GM10248 (cell line): ENCODE measurements at regions of chr14 and their contacts with region 1.

Region 1: DNA sequence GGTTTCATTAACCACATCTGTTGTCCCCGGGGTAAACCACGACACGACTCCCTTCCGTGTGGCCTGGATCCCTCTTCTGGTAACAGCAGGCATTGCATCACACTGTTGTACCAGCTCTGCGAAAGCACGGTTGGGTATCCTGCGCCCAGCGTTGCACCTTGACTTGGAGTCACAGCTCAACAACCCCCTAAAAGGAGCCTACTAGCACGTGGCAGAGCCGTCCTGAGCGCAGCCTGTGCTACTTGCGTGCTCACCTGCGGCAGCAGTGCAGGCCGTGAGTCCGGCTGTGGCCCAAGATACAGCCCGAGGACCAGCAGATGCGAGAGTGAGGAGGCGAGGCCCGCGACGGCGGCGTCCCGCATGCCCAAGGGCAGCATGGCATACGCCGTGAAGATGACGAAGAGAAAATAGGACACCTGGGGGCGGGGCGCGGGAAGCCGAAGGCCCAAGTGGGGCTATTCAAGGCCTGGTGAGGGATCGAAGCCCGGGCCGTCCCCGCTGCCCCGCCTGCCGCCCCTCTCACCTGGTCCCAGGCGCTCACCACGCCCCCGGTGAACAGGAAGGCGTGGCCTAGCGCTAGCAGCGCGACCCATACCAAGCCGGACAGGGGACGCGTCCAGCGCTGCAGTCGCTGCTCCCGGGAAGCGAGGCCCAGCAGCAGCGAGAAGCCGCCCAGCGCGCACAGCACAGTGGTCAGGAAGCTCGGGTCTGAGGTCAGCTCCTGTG is 2.4 kb downstream of the ADCY4 start:
- DNase-seq: peak; percentile 91
- CTCF ChIP-seq: peak; percentile 73

Region 2: GRCh38 chr14:23953464-23954278 is 378.8 kb before region 1 on chr14 and contains the start of gene DHRS4:
- CTCF ChIA-PET with region 1: no interaction called
- POLR2A ChIA-PET with region 1: no interaction called
- DNase-seq: peak; percentile 86
- CTCF ChIP-seq: peak; percentile 91

Region 3: GRCh38 chr14:24241829-24242443 is 90.5 kb before region 1 on chr14:
- CTCF ChIA-PET with region 1: interaction called, 17 read pairs
- POLR2A ChIA-PET with region 1: no interaction called
- DNase-seq: peak; percentile 97
- CTCF ChIP-seq: peak; percentile 11

Region 4: GRCh38 chr14:24315807-24316603 is 16.4 kb before region 1 on chr14:
- CTCF ChIA-PET with region 1: interaction called, 72 read pairs
- POLR2A ChIA-PET with region 1: no interaction called
- DNase-seq: no peak
- CTCF ChIP-seq: no peak

Region 5: GRCh38 chr14:24366721-24367513 is 34.5 kb after region 1 on chr14:
- CTCF ChIA-PET with region 1: interaction called, 20 read pairs
- POLR2A ChIA-PET with region 1: no interaction called
- DNase-seq: peak; percentile 91
- CTCF ChIP-seq: no peak

Region 6: DNA sequence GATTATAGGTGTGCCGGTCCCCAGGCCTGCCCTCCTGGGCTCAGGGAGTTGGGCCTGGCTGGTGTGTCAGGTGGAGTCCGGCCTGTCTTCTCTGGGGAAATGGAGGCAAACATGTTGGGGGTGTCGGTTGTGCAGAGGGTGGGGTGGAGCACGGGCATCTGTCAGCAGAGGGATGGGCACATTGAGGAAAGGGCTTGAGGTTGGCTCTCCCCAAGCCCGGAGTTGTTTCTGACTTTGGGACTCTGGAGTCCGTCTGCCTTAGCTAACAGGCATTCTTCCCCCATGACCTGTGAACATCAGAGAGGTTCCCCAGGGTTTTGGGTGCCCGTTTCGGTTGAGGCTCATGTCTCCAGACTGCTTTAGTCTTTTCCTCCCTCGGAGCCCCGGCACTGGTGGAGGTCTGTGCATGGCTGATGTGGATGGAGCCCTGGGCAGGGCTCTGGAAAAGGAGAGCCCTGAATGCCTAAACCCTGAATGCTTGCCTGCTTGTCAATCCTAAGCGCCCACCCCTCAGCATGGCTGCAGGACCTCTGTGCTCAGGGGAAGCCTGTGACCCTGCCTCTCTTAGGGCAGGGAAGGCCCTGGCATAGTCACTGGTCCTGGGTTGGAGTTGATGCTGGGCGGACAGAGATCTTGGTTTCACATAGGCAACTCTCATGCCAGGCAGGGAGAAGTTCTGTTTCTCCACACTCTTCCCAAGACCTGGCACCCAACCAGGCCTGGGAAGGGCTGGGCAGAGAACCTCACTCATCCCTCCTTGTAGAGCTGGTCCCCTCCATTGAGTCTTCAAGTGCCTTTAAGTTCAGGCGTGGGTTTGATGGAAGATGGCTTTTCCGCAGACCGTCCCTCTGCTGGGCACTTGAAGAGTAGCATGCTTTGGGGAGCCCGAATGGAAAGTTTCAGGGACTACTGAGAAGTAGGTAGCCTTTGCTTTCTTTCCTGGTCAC is 79.3 kb after region 1 on chr14:
- CTCF ChIA-PET with region 1: interaction called, 26 read pairs
- POLR2A ChIA-PET with region 1: no interaction called
- DNase-seq: peak; percentile 70
- CTCF ChIP-seq: peak; percentile 55

Region 7: DNA sequence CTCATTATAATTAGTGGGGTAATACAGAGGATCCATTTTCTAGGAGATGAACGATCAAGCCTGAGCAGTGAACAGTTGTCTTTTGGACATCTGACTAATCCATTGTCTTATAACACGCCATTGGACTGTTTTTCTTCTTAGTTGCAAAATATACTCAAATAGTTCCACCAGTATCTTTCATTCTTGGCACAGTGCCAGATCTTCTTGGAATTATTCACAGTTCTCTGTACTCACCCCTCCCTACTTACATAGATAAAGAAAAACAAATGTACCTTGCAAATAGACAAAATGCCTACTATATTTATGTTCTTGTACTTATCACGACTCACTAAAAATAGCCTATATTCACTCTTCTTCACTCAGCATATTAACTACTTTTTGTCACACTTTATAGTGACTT is 93.3 kb after region 1 on chr14:
- CTCF ChIA-PET with region 1: interaction called, 629 read pairs
- POLR2A ChIA-PET with region 1: interaction called, 3 read pairs
- DNase-seq: no peak
- CTCF ChIP-seq: no peak